PC-9 (cell line): ENCODE measurements at regions of chrX and their contacts with region 1.

Region 1: DNA sequence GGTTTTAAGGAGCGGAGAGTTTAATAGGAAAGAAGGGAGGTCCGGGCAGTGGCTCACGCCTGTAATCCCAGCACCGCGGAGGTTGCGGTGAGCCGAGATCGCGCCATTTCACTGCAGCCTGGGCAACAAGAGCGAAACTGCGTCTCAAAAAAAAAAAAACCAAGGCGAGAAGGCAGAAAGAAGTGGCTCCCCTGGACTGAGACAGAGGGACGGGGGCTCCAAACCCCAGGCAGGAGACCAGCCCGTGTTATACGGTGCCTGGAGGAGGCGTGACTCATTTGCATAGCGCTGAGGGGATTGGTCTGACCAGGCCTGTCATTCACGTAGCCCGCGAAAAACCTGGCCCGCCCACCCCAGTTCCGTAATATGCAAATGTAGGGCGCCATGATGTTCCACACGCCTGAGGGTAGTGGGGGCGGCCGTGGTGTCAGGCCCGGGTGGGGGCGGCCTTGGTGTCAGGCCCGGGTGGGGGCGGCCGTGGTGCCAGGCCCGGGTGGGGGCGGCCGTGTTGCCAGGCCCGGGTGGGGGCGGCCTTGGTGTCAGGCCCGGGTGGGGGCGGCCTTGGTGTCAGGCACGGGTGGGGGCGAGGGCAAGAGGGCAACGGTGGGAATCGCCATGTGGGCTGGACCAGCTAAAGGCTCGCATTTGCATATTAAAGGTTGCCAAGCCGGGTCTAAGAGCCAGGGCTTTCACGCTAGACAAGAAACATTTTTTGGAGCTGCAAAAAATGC is 2.1 kb downstream of the PLCXD1 start:
- DNase-seq: peak; percentile 57 to 70
- H3K4me3 ChIP-seq: peak overlapping the region; percentile 72
- H3K27ac ChIP-seq: no peak overlapping the region
- H3K4me1 ChIP-seq: no peaks in the 10 kb centered on the region
- H3K27me3 ChIP-seq: no peaks in the 10 kb centered on the region
- CTCF ChIP-seq: no peak

Region 2: GRCh38 chrX:267771-268261 is 15.5 kb before region 1 on chrX:
- CTCF ChIA-PET with region 1: no interaction called
- POLR2A ChIA-PET with region 1: no interaction called
- intact Hi-C with region 1: no loop called
- DNase-seq: no peak
- H3K4me3 ChIP-seq: no peak overlapping the region
- H3K27ac ChIP-seq: no peak overlapping the region
- H3K4me1 ChIP-seq: no peaks in the 10 kb centered on the region
- H3K27me3 ChIP-seq: no peaks in the 10 kb centered on the region
- CTCF ChIP-seq: no peak

Region 3: DNA sequence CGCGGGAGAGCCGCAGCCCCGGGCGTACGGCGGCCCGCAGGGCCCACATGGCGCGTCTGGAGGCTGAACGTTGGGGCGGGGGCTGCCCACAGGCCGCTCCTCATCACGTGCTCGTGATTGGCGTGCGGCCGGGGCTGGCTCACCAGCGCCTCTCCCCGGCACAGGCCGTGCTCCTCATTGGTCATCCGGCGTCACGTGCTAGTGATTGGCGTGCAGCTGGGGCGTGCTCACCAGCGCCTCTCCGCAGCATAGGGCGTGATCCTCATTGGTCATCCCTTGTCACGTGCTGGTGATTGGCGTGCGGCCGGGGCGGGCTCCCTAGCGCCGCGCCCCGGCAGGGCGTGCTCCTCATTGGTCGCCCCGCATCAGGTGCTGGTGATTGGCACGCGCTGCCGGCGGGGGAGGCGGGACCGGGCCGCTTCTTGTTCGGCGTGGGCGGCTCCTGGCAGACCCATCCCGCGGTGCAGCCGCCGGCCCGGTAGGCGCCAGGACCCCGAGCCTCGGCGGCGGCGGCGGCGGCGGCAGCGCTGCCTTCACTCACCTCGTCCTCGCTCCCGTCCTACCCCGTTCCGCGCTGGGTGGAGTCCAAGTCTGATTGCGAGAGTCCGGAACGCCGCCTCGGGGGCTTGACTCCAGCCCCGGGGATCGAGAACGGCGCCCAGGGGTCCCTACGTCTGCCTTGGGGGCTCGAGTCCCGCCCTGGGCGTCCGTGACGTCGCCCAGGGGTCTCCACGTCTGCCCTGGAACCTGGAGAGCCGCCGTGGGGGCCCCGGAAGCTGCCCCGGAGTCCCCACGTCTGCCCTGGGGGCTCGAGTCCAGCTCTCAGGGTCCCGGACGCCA is 35.7 kb after region 1 on chrX and contains the start of gene GTPBP6:
- CTCF ChIA-PET with region 1: no interaction called
- POLR2A ChIA-PET with region 1: no interaction called
- intact Hi-C with region 1: loop called (anchors 2 kb)
- DNase-seq: peak; percentile 92 to 97
- H3K4me3 ChIP-seq: peak within 1 kb of the TSS; percentile 69
- H3K27ac ChIP-seq: peak within 1 kb of the TSS; percentile 78
- H3K4me1 ChIP-seq: no peaks in the 10 kb centered on the region
- H3K27me3 ChIP-seq: no peaks in the 10 kb centered on the region
- CTCF ChIP-seq: no peak
- total RNA-seq, gene GTPBP6: 43.5 and 47.0 TPM in 2 replicates